Activated T-helper 2 cell treated with anti-CD3 and anti-CD28 coated beads, Interferon-gamma antibody, Interleukin-2, Interleukin-4, amounts not matched to agents 10 μg/mL and 5 μg/mL and 100 μg/mL, durations not matched to agents 14 hours and 24 hours and 36 hours (primary cell): ENCODE measurements at regions of chr9 and their contacts with region 1.

Region 1: DNA sequence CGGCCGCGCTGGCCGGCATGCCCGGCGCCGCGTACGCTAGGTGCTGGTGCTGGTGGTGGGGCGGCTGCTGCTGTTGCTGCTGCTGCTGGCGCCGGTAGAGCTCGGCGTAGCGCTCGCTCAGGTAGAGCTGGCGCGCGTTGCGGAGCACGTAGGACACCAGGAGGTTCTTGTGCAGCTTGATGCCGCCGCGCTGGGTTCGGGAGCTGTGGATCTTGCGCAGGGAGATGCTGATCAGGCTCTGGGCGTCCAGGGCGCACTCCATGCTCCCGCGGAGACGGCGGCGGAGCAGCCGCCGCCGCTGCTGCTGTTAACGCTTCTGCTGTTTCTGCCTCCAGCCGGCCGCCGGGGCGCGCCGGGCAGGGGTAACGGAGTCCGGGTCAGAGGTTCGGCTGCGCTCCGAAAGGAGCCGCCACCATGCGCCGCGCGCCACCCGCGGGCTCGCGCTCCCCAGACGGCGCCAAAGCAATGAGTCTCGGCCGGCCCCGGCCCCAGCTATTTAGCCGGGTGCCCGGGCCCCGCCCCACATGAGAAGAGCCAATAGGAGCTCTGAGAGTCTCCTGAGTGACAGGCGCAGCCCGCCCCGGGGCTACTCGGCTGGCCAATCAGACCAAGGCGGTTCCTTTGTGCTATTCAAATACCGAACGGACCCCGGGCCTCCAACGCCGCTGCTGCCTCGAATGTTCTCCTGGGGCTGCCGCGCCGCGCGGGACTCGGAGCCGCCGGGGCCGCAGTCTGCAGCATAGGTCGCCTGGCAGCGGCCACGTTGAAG is at the start of gene IER5L:
- DNase-seq: peak; percentile 93
- H3K4me3 Mint-ChIP-seq: peak within 1 kb of the TSS; percentile 91
- H3K27ac Mint-ChIP-seq: peak within 1 kb of the TSS; percentile 76
- H3K4me1 Mint-ChIP-seq: peaks cover 12% of the 10 kb centered on the region
- H3K27me3 Mint-ChIP-seq: peaks cover 3% of the 10 kb centered on the region
- total RNA-seq, gene IER5L: 8.6 and 9.3 TPM in 2 replicates

Region 2: GRCh38 chr9:129139993-129140396 is 38.0 kb before region 1 on chr9:
- intact Hi-C with region 1: loop called (anchors 1 kb)
- DNase-seq: peak; percentile 77
- H3K4me3 Mint-ChIP-seq: peak overlapping the region; percentile 86
- H3K27ac Mint-ChIP-seq: peak overlapping the region; percentile 97
- H3K4me1 Mint-ChIP-seq: peaks cover 37% of the 10 kb centered on the region
- H3K27me3 Mint-ChIP-seq: no peaks in the 10 kb centered on the region

Region 3: GRCh38 chr9:129270903-129271431 is 93.0 kb after region 1 on chr9:
- intact Hi-C with region 1: loop called (anchors 5 kb)
- DNase-seq: no peak
- H3K4me3 Mint-ChIP-seq: peak overlapping the region; percentile 54
- H3K27ac Mint-ChIP-seq: peak overlapping the region; percentile 73
- H3K4me1 Mint-ChIP-seq: peaks cover 24% of the 10 kb centered on the region
- H3K27me3 Mint-ChIP-seq: peaks cover 19% of the 10 kb centered on the region

Region 4: DNA sequence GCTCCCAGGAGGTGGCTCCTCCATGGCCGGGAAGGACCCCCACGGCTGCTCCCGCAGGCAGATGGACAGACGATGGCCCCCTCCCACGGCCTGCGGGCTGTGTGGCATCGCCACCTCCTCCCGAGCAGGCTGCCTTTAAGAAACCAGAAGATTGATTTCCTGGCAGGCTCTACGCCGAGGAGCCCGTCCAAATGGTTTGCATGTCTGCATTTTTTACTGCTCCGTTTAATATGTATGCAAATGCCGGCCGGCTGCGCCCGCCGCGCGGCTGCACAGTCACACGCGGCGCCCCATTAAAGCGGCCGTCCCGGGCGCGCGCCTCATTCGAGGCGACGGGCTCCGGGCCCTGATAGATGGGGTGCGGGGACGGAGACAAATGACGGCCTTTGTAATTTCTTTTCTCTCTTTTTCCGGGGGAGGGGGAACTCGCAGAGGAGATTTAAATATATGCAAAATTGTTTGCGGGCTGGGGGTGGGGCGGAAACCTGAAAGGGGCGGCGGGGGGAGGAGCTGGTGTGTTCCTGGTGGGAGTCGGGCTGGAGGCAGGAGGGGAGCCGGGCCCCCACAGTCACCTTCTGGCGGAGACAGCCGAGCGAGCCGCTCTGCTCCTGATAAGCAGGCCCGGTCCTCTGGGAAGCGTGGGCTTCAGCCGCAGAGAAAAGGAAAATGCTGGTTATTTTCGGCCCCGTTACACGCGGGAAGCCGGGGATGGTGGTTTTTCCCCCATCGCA is 158.8 kb after region 1 on chr9:
- intact Hi-C with region 1: loop called (anchors 5 kb)
- DNase-seq: no peak
- H3K4me3 Mint-ChIP-seq: peak overlapping the region; percentile 40
- H3K27ac Mint-ChIP-seq: no peak overlapping the region
- H3K4me1 Mint-ChIP-seq: peaks cover 12% of the 10 kb centered on the region
- H3K27me3 Mint-ChIP-seq: peaks cover 6% of the 10 kb centered on the region

Region 5: DNA sequence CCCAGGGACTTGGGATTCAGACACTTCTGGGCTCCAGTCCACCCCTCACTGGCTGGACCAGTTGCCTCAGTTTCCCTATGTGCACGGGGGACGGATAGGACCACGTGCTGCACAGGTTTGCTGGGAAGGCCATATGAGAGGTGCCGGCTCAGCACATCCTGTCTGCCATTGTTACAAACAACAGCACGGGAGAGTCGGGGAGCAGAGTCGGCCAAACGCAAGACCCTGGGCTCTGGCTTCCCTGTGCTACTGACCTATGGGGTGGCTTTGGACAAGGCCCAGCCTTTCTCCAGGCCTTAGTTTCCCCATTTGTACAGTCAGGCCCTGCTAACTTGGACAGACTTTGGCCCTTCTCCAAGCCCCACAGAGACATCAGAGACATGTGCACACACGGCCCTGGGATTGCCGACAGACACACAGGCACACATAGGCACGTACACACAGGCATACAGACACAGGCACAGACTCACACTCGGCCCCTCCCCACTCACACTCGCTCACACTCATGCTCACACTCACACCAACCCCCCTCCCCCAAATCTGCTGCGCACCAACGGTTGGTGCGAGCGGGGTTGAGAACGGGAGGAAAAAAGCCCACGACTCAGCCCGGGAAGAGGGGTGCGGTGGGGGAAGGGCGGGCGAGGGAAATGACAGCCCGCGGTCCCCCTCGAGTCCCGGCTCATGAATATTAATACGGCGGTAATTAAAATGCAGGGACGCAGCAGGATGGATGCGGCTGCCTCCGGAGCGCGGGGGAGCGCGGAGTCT is 309.9 kb after region 1 on chr9:
- intact Hi-C with region 1: loop called (anchors 2 kb)
- DNase-seq: peak; percentile 28
- H3K4me3 Mint-ChIP-seq: peak overlapping the region; percentile 91
- H3K27ac Mint-ChIP-seq: peak overlapping the region; percentile 100
- H3K4me1 Mint-ChIP-seq: peaks cover 52% of the 10 kb centered on the region
- H3K27me3 Mint-ChIP-seq: no peaks in the 10 kb centered on the region